Sigmoid colon (tissue), 7 donors: ENCODE measurements at regions of chr16 and their contacts with region 1.

Region 1: DNA sequence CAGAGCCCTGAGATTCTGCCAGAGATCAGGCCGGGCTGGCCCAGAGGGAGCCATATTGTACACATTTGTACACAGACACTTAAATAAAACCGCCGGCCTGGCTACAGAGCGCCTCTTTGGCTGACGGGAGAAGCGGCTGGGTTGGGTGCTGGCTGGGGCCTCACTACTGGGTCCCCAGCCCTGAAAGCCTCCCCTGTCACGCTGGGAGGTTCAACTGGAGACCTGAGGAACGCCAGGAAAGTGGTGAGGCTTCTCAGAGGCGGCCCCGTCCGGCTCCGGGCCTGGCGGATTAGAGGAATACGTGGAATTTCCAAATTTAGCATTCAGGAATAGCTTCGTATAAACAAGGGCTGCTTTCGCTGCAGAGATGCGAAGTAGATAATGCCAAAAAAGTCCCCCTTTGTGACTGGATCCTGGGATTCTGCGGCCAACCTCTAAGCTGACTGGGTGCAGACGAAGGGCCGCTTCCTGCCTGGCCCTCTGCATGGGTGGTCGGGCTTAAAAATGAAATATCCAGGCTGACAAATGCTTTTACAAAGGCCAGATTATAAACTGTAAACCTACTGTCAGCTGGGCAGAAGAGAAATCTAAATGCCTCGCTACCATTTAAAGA is 252.4 kb downstream of the IRF8 start:
- DNase-seq: peak; percentile 87
- H3K4me3 ChIP-seq: peak overlapping the region in 2 of 4 donors; percentile 2 to 20
- H3K27ac ChIP-seq: peak overlapping the region; percentile 84 to 90 (median 88)
- H3K4me1 ChIP-seq: peaks cover 0 to 64% (median 43%) of the 10 kb centered on the region in 4 donors
- H3K27me3 ChIP-seq: no peaks in the 10 kb centered on the region
- CTCF ChIP-seq: no peak
- EP300 ChIP-seq: peak; percentile 36 to 76 (median 56)
- POLR2A ChIP-seq: peak in 1 of 2 donors; percentile 7

Region 2: DNA sequence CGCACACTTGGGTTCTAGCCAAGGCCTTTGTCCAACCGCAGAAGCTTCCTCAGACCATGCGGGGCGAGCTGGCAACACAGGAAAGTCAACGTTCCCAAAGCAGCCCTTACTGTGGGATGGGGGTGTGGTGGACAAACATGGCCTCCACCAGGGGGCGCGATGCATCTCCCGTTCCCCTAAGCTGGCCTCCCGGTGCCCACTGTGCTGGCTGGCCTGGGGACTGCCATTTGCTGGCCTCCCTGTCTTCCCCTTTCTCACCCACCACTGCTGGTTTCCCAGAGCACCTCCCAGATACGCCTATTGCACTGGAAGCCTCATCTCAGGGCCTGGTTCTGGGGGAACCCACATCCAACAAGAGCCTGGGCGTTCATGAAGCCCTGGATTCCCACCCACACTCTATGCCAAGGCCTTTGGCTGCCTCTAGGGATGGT is 107.1 kb before region 1 on chr16:
- intact Hi-C with region 1: no loop called
- DNase-seq: peak; percentile 78
- H3K4me3 ChIP-seq: no peak overlapping the region
- H3K27ac ChIP-seq: no peak overlapping the region
- H3K4me1 ChIP-seq: no peaks in the 10 kb centered on the region
- H3K27me3 ChIP-seq: peaks cover 0 to 4% (median 0%) of the 10 kb centered on the region in 3 donors
- CTCF ChIP-seq: peak in 3 of 4 experiments; percentile 20 to 55 (median 43)
- EP300 ChIP-seq: no peak
- POLR2A ChIP-seq: no peak

Region 3: GRCh38 chr16:86078121-86078600 is 73.2 kb before region 1 on chr16:
- intact Hi-C with region 1: loop called (anchors 2 kb)
- DNase-seq: peak; percentile 95
- H3K4me3 ChIP-seq: no peak overlapping the region
- H3K27ac ChIP-seq: peak overlapping the region in 3 of 4 donors; percentile 81 to 89 (median 86)
- H3K4me1 ChIP-seq: peaks cover 0 to 24% (median 15%) of the 10 kb centered on the region in 4 donors
- H3K27me3 ChIP-seq: no peaks in the 10 kb centered on the region
- CTCF ChIP-seq: no peak
- EP300 ChIP-seq: peak; percentile 92 to 97 (median 95)
- POLR2A ChIP-seq: no peak

Region 4: GRCh38 chr16:86285938-86286921 is 134.9 kb after region 1 on chr16:
- intact Hi-C with region 1: loop called (anchors 5 kb)
- DNase-seq: peak; percentile 85
- H3K4me3 ChIP-seq: peak overlapping the region; percentile 36 to 52 (median 42)
- H3K27ac ChIP-seq: peak overlapping the region in 3 of 4 donors; percentile 22 to 74 (median 59)
- H3K4me1 ChIP-seq: peaks cover 0 to 32% (median 16%) of the 10 kb centered on the region in 4 donors
- H3K27me3 ChIP-seq: peaks cover 0 to 25% (median 0%) of the 10 kb centered on the region in 3 donors
- CTCF ChIP-seq: no peak
- EP300 ChIP-seq: peak in 2 of 4 donors; percentile 66 to 81
- POLR2A ChIP-seq: no peak

Region 5: DNA sequence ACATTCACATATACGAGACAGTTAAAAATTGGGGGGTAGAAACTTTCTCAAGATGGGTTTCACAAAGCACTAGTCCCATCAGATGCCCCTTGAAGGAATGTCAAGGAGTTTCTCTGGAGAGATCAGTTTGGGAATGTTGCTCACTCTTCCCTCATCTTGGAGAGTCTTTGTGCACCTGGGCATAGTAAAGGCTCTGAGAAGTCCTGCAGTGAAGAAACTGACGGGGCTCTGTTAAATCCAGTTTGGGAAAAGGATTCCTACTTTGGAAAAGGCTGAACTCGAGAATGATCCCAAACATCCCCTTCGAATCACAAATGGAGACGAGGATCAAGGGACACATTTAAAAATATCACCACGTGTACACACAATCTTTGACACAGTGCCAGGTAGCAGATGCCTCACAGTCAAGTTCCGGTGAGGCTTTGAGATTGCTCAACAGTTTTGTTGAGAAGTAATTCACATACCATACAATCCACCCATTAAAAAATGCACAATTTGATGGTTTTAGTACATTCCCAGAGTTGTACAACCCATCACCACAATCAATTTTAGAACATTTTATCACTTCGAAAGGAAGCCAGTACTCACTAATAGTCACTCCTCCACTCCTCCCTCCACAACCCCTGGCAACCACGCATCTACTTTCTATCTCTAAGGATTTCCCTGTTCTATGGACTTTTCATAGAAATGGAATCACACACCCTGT is 155.6 kb after region 1 on chr16:
- intact Hi-C with region 1: loop called (anchors 5 kb)
- DNase-seq: peak; percentile 32
- H3K4me3 ChIP-seq: no peak overlapping the region
- H3K27ac ChIP-seq: peak overlapping the region; percentile 25 to 96 (median 94)
- H3K4me1 ChIP-seq: peaks cover 0 to 57% (median 49%) of the 10 kb centered on the region in 4 donors
- H3K27me3 ChIP-seq: no peaks in the 10 kb centered on the region
- CTCF ChIP-seq: no peak
- EP300 ChIP-seq: no peak
- POLR2A ChIP-seq: no peak